ENCODE measurements at regions of chr9 and their contacts with region 1.

Region 1: GRCh38 chr9:126301985-126302603 is 24.5 kb upstream of the MVB12B start:
- DNase-seq: peak; percentile 51
- H3K4me3 Mint-ChIP-seq: no peak overlapping the region
- H3K27ac Mint-ChIP-seq: no peak overlapping the region
- H3K4me1 Mint-ChIP-seq: no peaks in the 10 kb centered on the region
- H3K27me3 Mint-ChIP-seq: peaks cover 42% of the 10 kb centered on the region
- CTCF ChIP-seq: peak; percentile 29

Region 2: DNA sequence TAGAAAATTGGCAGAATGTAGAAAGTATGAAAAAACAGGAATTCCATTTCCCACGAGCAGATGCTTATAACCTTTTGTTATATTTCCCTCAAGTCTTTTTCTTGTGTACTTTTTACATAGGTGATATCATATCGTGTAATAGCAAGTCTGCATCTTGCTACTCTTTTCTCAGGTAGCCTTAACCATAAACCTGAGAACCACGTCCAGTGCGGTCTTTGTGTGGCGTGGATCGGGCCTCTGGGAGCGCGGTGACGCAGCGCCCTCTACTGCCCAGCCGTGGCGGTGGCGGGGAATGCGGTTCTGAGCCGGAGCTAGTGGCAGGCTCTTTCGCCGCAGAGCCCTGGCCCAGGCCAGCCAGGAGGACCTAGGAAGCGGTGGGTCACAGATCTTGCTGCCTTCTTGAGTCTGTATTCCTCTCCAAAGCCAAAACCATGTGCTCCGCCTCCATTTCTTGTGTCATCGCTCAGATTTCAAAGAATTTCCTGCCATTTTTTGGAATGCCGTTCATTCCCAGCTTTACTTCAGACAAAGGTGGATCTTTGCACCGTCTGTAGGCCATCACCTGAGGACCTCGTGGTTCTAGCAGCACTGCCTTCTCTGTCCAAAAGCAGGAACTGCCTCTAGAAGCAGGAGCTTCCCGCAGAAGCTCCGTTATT is 96.4 kb after region 1 on chr9:
- CTCF ChIA-PET with region 1: interaction called, 3 read pairs
- intact Hi-C with region 1: loop called (anchors 2 kb)
- DNase-seq: peak; percentile 69
- H3K4me3 Mint-ChIP-seq: no peak overlapping the region
- H3K27ac Mint-ChIP-seq: no peak overlapping the region
- H3K4me1 Mint-ChIP-seq: peaks cover 10% of the 10 kb centered on the region
- H3K27me3 Mint-ChIP-seq: no peaks in the 10 kb centered on the region
- CTCF ChIP-seq: peak; percentile 57

Region 3: DNA sequence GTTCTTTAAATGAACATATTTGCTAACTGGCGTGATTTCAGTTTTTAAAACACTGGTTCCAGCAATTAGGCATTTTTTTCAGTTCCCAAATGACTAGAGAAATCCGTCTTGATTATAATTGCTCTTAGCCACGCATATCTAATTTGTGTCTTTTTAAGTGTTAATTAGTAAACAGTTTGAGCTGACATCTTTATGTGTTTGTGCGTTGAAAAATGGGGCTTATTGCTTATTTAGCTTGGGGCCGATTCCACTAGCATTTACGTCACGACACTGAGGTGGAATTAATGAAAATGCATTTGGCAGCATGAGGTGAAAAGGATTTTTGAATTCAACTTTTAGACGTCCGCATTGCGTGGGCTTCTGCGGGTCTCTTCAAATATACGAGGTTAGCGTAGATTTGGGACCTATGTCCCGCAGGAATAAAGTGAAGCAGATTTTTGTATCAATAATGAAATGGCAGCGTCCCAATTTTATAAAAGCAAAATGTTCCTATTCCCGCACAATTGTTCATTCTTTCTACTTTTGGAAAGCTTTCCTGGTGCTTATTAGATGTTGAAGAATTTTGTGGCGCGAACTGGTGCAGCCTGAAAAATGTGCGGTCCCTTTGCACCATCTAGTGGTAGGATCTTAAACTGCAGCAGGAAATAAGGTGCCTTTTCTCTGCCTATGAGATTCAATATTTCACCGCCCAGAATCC is 188.9 kb after region 1 on chr9:
- CTCF ChIA-PET with region 1: interaction called, 3 read pairs
- intact Hi-C with region 1: loop called (anchors 5 kb)
- DNase-seq: peak; percentile 59
- H3K4me3 Mint-ChIP-seq: no peak overlapping the region
- H3K27ac Mint-ChIP-seq: no peak overlapping the region
- H3K4me1 Mint-ChIP-seq: no peaks in the 10 kb centered on the region
- H3K27me3 Mint-ChIP-seq: no peaks in the 10 kb centered on the region
- CTCF ChIP-seq: peak; percentile 55